H1 (cell line): ENCODE measurements at regions of chr15 and their contacts with region 1.

Region 1: DNA sequence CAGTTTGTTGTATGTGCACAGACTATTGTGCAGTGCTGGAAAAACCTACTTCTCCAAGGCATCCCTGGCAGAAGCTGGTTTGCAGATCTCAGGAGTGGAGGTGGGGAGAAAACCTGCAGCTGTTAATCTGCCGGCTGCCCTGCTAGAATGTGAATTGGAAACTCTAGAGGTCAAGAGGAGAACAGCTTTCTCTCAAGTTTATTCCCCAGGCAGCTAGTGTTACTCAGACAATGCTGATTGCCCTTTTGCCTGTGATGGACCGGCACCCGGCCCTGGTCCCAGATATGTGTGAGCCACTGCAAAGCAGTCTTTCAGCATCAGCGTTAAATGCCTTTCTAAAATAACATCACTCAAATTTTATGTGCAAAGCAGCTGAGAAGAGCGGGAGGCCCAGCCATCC is 129.7 kb upstream of the TPM1 start:
- DNase-seq: no peak
- H3K4me3 ChIP-seq: no peak overlapping the region
- H3K27ac ChIP-seq: no peak overlapping the region
- H3K4me1 ChIP-seq: peaks cover 7 to 14% (median 11%) of the 10 kb centered on the region in 4 experiments
- H3K27me3 ChIP-seq: no peaks in the 10 kb centered on the region
- CTCF ChIP-seq: peak in 2 of 3 experiments; percentile 19 to 36; a peak in 3 of 4 replicates
- EP300 ChIP-seq: no peak
- POLR2A ChIP-seq: no peak
- RAD21 ChIP-seq: peak in 1 of 2 experiments; percentile 40; a peak in 1 of 4 replicates

Region 2: GRCh38 chr15:62901909-62902546 is 10.8 kb before region 1 on chr15:
- CTCF ChIA-PET with region 1: interaction called, 12 read pairs
- POLR2A ChIA-PET with region 1: interaction called, 5 read pairs
- DNase-seq: no peak
- H3K4me3 ChIP-seq: no peak overlapping the region
- H3K27ac ChIP-seq: no peak overlapping the region
- H3K4me1 ChIP-seq: peaks cover 2 to 19% (median 7%) of the 10 kb centered on the region in 4 experiments
- H3K27me3 ChIP-seq: no peaks in the 10 kb centered on the region
- CTCF ChIP-seq: peak in 1 of 3 experiments; percentile 15; a peak in 1 of 4 replicates
- EP300 ChIP-seq: no peak
- POLR2A ChIP-seq: no peak
- RAD21 ChIP-seq: peak in 1 of 2 experiments; percentile 23; a peak in 1 of 4 replicates

Region 3: DNA sequence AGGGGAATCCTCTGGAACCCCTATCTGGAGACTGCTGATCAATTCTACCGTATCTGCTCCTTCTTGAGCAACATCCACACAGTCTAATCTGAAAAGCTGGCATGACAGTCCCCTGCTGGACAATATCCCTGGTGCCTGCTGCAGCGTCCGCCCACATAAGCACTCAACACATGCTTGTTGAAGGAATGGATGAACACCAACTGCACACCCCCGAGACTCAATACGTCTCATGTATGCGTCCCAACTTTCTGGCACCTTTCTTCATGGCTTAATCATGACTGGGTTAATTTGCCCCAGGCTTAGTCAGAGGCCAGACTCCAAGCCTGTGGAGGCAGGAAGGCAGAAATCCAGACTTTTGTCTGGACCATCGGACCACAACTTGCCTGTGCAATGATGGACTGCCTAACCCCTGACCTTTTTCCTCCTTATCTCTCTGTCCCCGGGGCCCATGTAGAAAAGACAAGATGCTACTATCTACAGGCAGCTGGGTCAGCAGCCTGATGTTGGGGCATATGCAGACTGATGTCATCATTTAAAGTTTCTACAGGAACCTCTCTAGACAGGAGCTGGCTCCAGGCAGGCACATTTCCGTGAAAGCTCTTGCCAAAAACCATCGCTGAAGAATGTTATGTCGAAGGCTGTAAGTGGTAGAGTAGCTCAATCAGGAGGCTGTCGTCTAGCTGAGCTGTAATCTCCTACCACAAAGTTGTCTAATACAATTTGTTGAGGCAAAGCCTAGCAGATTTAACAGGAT is 15.6 kb after region 1 on chr15:
- CTCF ChIA-PET with region 1: interaction called, 10 read pairs
- POLR2A ChIA-PET with region 1: interaction called, 4 read pairs
- DNase-seq: no peak
- H3K4me3 ChIP-seq: no peak overlapping the region
- H3K27ac ChIP-seq: no peak overlapping the region
- H3K4me1 ChIP-seq: no peaks in the 10 kb centered on the region
- H3K27me3 ChIP-seq: no peaks in the 10 kb centered on the region; a peak in 1 of 7 replicates
- CTCF ChIP-seq: peak in 1 of 3 experiments; percentile 1; a peak in 1 of 4 replicates
- EP300 ChIP-seq: no peak
- POLR2A ChIP-seq: no peak
- RAD21 ChIP-seq: peak; percentile 4 to 29; a peak in 1 of 4 replicates

Region 4: DNA sequence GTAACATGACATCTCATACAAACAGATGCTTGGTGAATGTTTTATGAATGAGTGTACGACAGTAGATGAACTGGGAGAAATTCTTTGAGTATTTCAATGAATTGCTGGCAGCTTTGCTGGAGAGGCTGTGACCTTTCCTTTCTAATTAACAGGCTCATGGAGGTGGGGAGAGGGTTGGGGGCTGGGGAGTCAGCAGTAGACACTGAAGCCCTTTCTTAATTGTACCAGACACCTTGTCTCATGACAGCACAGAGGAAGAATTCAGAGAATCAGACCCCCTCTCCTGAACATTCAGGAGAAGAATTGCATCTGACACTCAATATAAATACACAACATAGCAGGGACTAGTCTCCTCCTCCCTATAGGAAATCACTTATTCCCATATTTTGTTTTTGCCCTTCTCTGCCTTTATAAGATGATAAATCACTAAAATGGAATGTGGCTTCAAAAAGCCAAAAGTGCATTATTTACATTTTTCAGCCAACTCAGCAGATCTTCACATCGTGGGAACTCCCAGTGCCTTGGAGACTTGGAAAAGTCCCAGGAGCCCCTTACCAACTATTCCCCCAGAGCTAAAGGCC is 63.6 kb after region 1 on chr15:
- CTCF ChIA-PET with region 1: no interaction called
- POLR2A ChIA-PET with region 1: no interaction called
- DNase-seq: no peak
- H3K4me3 ChIP-seq: no peak overlapping the region
- H3K27ac ChIP-seq: no peak overlapping the region
- H3K4me1 ChIP-seq: no peaks in the 10 kb centered on the region
- H3K27me3 ChIP-seq: no peaks in the 10 kb centered on the region
- CTCF ChIP-seq: no peak
- EP300 ChIP-seq: no peak
- POLR2A ChIP-seq: no peak
- RAD21 ChIP-seq: no peak